Endothelial cell of umbilical vein (primary cell): ENCODE measurements at regions of chr5 and their contacts with region 1.

Region 1: DNA sequence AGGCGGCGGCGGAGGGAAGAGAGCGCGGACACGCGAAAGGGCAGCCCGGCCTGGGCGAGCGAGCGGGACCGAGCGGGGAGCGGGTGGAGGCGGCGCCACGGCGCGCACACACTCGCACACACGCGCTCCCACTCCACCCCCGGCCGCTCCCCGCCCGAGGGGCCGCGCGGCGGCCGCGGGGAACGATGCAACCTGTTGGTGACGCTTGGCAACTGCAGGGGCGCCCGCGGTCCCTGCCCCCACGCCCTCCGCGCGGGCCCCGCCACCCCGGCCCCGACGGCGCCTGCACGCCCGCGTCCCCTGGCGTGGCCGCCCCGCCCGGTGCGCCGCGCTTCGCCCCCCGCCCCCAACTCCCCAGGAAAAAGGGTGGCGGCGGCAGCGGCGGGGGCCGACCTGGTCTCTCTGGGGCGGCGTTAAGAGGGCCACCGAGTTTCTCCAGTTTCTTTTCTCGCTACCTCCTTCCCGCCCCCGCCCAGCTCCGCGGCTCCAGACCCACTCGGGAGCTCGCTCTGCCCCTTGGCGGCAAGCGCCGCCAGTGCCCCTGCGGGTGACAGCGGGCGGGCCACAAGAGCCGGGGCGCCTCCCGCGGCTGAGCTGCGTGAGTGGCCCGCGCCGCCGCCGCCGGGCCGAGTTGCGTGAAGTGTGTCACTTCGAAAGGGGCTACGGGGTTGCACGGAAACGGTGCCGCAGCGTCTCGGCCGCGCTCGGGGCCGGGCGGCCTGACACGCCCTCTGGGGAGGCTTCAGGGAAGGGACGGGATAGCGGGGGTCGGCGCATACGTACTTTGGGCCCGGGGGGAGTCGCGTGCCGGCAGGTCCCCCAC is at the start of gene NR3C1:
- DNase-seq: peak; percentile 78
- H3K4me3 ChIP-seq: peak within 1 kb of the TSS; percentile 64 to 94 (median 87)
- H3K27ac ChIP-seq: peak within 1 kb of the TSS; percentile 94
- H3K4me1 ChIP-seq: peaks cover 39% of the 10 kb centered on the region
- H3K27me3 ChIP-seq: no peaks in the 10 kb centered on the region
- CTCF ChIP-seq: peak; percentile 16 to 62
- POLR2A ChIP-seq: no peak
- total RNA-seq, gene NR3C1: 17.0 and 21.2 TPM in 2 replicates

Region 2: GRCh38 chr5:143063175-143063970 is 340.4 kb before region 1 on chr5:
- CTCF ChIA-PET with region 1: interaction called, 11 read pairs
- POLR2A ChIA-PET with region 1: no interaction called
- dilution Hi-C with region 1: no loop called
- intact Hi-C with region 1: loop called (anchors 2 kb)
- DNase-seq: no peak
- H3K4me3 ChIP-seq: no peak overlapping the region
- H3K27ac ChIP-seq: peak overlapping the region; percentile 12
- H3K4me1 ChIP-seq: peaks cover 59% of the 10 kb centered on the region
- H3K27me3 ChIP-seq: no peaks in the 10 kb centered on the region
- CTCF ChIP-seq: no peak
- POLR2A ChIP-seq: no peak

Region 3: GRCh38 chr5:143213851-143214363 is 189.9 kb before region 1 on chr5:
- CTCF ChIA-PET with region 1: interaction called, 11 read pairs
- POLR2A ChIA-PET with region 1: no interaction called
- dilution Hi-C with region 1: loop called (anchors 25 kb)
- intact Hi-C with region 1: loop called (anchors 2 kb)
- DNase-seq: peak; percentile 64
- H3K4me3 ChIP-seq: no peak overlapping the region
- H3K27ac ChIP-seq: peak overlapping the region; percentile 10
- H3K4me1 ChIP-seq: peaks cover 21% of the 10 kb centered on the region
- H3K27me3 ChIP-seq: no peaks in the 10 kb centered on the region
- CTCF ChIP-seq: no peak
- POLR2A ChIP-seq: no peak

Region 4: GRCh38 chr5:143592648-143593047 is 188.8 kb after region 1 on chr5:
- CTCF ChIA-PET with region 1: interaction called, 3 read pairs
- POLR2A ChIA-PET with region 1: no interaction called
- dilution Hi-C with region 1: no loop called
- intact Hi-C with region 1: loop called (anchors 10 kb)
- DNase-seq: peak; percentile 42
- H3K4me3 ChIP-seq: no peak overlapping the region
- H3K27ac ChIP-seq: no peak overlapping the region
- H3K4me1 ChIP-seq: peaks cover 16% of the 10 kb centered on the region
- H3K27me3 ChIP-seq: no peaks in the 10 kb centered on the region
- CTCF ChIP-seq: no peak
- POLR2A ChIP-seq: no peak

Region 5: DNA sequence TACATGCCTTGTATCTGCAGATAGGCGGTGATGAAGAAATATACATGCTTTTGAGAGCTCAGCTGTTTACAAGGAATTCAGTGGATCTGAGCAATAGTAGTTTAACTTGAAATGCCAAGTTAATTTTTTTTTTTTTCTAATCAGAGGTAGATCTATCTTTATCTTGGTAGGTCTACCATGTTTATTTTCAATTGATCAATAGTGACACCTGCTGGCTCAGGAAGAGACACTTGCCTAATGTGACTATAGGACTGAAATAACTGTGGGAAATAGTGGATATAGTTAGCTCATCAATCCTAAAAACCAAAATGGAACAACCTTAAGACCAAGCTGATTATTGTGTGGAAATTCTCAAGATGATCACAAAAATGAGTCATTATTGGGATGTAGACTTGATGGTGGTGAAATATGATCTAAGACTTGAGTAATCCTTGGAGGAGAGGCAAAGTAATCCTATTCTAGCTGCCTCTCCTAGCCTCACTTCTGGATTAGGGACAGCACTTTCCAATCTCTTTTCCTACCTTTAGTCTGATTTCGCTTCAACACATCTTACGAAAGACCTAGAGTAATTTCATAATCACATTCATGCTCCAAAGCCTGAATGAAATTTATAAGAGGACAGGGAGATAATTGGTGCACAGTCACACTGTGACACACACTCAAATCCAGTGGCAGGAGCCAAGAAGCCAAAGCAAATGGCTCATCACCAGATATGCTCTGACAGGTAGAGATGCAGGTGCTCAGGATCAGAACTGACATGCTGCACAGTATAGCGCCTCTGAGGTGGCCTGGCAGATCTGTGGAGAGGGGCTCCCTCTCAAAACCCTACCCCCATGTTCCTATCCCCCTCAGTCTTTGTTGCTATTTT is 564.4 kb after region 1 on chr5:
- CTCF ChIA-PET with region 1: interaction called, 6 read pairs
- POLR2A ChIA-PET with region 1: no interaction called
- dilution Hi-C with region 1: no loop called
- intact Hi-C with region 1: loop called (anchors 5 kb)
- DNase-seq: peak; percentile 54
- H3K4me3 ChIP-seq: no peak overlapping the region
- H3K27ac ChIP-seq: no peak overlapping the region
- H3K4me1 ChIP-seq: peaks cover 9% of the 10 kb centered on the region
- H3K27me3 ChIP-seq: no peaks in the 10 kb centered on the region
- CTCF ChIP-seq: peak in 1 of 2 donors; percentile 18
- POLR2A ChIP-seq: no peak

Region 6: GRCh38 chr5:144191998-144192397 is 788.2 kb after region 1 on chr5:
- CTCF ChIA-PET with region 1: interaction called, 6 read pairs
- POLR2A ChIA-PET with region 1: no interaction called
- dilution Hi-C with region 1: no loop called
- intact Hi-C with region 1: loop called (anchors 2 kb)
- DNase-seq: peak; percentile 88
- H3K4me3 ChIP-seq: no peak overlapping the region
- H3K27ac ChIP-seq: peak overlapping the region; percentile 88
- H3K4me1 ChIP-seq: peaks cover 44% of the 10 kb centered on the region
- H3K27me3 ChIP-seq: no peaks in the 10 kb centered on the region
- CTCF ChIP-seq: peak; percentile 43 to 60
- POLR2A ChIP-seq: no peak